Dorsolateral prefrontal cortex (tissue), 120 donors: ENCODE measurements at regions of chr1 and their contacts with region 1.

Region 1: GRCh38 chr1:210347112-210347511 is 18.4 kb downstream of the HHAT start:
- DNase-seq: peak in 6 of 10 donors; percentile 27 to 69 (median 57)
- H3K4me3 ChIP-seq: no peak overlapping the region
- H3K27ac ChIP-seq: peak overlapping the region in 11 of 59 donors; percentile 33 to 83 (median 65)
- H3K27me3 ChIP-seq: no peaks in the 10 kb centered on the region
- CTCF ChIP-seq: no peak

Region 2: GRCh38 chr1:210394281-210394821 is 47.2 kb after region 1 on chr1:
- intact Hi-C with region 1: loop called in 1 of 2 experiments (anchors 1 kb)
- DNase-seq: no peak
- H3K4me3 ChIP-seq: no peak overlapping the region
- H3K27ac ChIP-seq: peak overlapping the region in 58 of 59 donors; percentile 66 to 96 (median 89)
- H3K27me3 ChIP-seq: no peaks in the 10 kb centered on the region
- CTCF ChIP-seq: no peak